BJ (cell line): ENCODE measurements at regions of chr13 and their contacts with region 1.

Region 1: DNA sequence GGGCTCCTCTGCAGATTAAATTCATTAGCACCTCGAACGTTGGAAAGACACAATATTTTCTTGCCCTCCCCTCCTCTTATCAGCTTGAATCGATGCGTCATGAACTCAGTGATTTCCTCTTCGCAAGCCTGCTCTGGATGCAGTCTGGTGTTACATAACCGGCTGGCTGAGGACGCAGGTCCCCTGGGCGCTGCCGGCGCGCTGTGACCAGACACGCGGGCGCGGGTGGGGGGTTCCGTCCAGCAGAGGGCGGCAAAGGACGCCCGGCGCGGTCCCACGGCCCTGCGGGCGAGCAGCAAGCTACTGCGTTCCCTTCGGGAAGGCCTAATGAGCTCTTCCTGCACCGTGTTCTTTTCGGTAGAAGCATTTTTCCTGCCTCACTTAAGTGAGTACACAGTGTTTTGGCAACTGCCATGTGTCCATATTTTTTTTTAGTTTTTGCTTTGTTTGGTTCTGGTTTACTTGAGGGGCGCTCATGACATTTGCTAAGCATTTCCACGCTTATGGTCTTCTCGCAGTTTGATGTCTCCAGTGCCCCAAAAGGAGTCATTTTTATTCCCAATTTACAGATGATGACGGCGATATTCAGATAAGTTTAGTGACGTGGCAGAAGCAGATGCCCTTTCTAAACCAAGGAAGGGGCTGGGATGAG is 112.2 kb upstream of the MBNL2 start:
- DNase-seq: peak; percentile 49
- H3K4me3 ChIP-seq: no peak overlapping the region
- H3K27me3 ChIP-seq: no peaks in the 10 kb centered on the region
- CTCF ChIP-seq: peak; percentile 87

Region 2: DNA sequence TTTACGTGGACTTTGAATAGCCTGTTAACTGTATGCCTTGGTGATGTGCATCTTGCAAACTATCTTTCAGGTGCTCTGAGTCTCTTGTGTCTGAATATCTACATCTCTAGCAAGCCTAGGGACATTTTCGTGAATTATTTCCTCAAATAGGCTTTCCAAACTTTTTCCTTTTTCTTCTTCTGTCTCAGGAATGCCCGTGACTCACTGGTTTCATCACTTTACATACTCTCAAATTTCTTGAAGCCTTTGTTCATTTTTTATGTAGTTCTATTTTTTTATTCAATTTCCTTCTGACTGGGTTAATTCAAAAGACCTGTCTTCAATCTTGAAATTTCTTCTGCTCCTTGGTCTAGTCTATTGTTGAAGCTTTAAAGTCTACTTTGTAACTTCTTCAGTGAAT is 447.9 kb before region 1 on chr13:
- CTCF ChIA-PET with region 1: no interaction called
- POLR2A ChIA-PET with region 1: no interaction called
- DNase-seq: no peak
- H3K4me3 ChIP-seq: no peak overlapping the region
- H3K27me3 ChIP-seq: no peaks in the 10 kb centered on the region
- CTCF ChIP-seq: no peak

Region 3: GRCh38 chr13:97030705-97031452 is 79.1 kb before region 1 on chr13:
- CTCF ChIA-PET with region 1: no interaction called
- POLR2A ChIA-PET with region 1: no interaction called
- DNase-seq: no peak
- H3K4me3 ChIP-seq: no peak overlapping the region
- H3K27me3 ChIP-seq: no peaks in the 10 kb centered on the region
- CTCF ChIP-seq: peak; percentile 36

Region 4: DNA sequence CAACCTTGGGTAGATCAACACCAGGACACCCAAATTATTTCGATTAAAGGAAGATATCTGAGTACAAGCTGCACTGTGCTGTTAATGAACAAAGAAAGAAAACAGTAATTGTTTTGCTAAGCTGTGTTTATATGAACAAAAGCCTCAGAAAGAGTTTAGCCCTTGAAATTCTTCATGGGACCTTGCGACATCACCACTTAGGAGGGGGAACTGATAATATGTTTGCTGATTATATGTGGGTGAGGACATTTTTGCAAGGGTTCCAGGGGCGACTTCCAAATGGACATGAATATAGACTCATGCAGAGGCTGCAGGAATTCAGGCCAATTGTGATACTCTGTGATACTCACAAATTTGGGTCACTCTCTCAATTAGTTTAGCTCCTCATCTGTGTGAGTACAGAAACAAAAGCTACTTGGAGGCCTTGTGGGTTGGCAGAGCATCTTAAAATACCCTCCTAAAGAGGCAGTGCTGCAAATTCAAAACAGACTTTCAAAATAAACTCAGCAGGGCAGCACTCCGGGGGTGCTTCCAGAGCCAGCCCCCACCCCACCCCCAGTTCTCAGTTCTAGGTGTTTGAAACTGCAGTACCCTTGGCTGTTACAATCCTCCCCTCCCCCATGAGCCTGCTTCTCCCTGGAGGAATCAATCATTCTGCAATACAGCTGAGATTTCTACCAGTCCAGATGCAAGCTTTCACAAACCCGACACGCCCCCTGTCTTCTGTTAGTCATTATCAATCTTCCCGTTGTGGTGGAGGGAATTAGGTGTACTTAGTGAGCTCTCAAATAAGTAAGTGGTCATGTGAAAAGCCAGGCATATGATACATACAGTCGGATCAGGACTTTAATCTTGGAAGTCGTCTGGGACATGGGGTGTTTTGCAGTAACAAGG is 15.2 kb after region 1 on chr13:
- CTCF ChIA-PET with region 1: interaction called, 25 read pairs
- POLR2A ChIA-PET with region 1: no interaction called
- DNase-seq: no peak
- H3K4me3 ChIP-seq: no peak overlapping the region
- H3K27me3 ChIP-seq: no peaks in the 10 kb centered on the region
- CTCF ChIP-seq: 0 out of 2 replicates have a peak, but pooled peaks have one; percentile 25

Region 5: GRCh38 chr13:97141564-97142005 is 31.6 kb after region 1 on chr13:
- CTCF ChIA-PET with region 1: interaction called, 15 read pairs
- POLR2A ChIA-PET with region 1: no interaction called
- DNase-seq: no peak
- H3K4me3 ChIP-seq: no peak overlapping the region
- H3K27me3 ChIP-seq: peaks cover 3% of the 10 kb centered on the region
- CTCF ChIP-seq: no peak

Region 6: DNA sequence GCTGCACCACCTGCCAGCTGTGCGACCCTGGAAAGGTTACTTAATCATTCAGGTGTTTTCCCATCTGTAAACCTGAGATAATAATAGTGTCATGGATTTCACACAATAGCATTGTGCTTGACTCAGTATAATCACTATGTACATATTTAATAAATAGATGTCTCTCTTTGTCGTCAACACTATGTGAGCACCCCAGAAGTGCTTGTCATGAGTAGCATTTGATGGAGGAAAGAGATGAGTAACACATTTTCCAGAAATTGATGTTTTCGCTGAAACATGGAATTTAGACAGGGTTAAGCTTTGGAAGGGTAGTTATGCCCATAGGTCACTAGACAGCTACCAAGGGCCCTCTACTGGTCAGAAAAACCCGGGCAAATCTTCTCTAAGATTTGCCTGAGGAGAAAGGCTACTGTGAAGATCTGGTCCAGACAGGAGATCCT is 102.7 kb after region 1 on chr13:
- CTCF ChIA-PET with region 1: interaction called, 65 read pairs
- POLR2A ChIA-PET with region 1: interaction called, 3 read pairs
- DNase-seq: no peak
- H3K4me3 ChIP-seq: no peak overlapping the region
- H3K27me3 ChIP-seq: no peaks in the 10 kb centered on the region
- CTCF ChIP-seq: peak; percentile 82

Region 7: GRCh38 chr13:97221989-97222700 is 112.2 kb after region 1 on chr13 and contains the start of gene MBNL2:
- CTCF ChIA-PET with region 1: interaction called, 21 read pairs
- POLR2A ChIA-PET with region 1: no interaction called
- DNase-seq: peak; percentile 73
- H3K4me3 ChIP-seq: peak within 1 kb of the TSS; percentile 76
- H3K27me3 ChIP-seq: no peaks in the 10 kb centered on the region
- CTCF ChIP-seq: no peak
- polyA plus RNA-seq, gene MBNL2: 27.4 and 45.5 TPM in 2 replicates

Region 8: GRCh38 chr13:97257800-97258799 is 148.1 kb after region 1 on chr13:
- CTCF ChIA-PET with region 1: no interaction called
- POLR2A ChIA-PET with region 1: no interaction called
- DNase-seq: peak; percentile 68
- H3K4me3 ChIP-seq: no peak overlapping the region
- H3K27me3 ChIP-seq: no peaks in the 10 kb centered on the region
- CTCF ChIP-seq: peak; percentile 34

Region 9: GRCh38 chr13:97344265-97345175 is 234.6 kb after region 1 on chr13:
- CTCF ChIA-PET with region 1: interaction called, 68 read pairs
- POLR2A ChIA-PET with region 1: no interaction called
- DNase-seq: no peak
- H3K4me3 ChIP-seq: no peak overlapping the region
- H3K27me3 ChIP-seq: no peaks in the 10 kb centered on the region
- CTCF ChIP-seq: peak; percentile 74

Region 10: GRCh38 chr13:97359181-97360057 is 249.5 kb after region 1 on chr13:
- CTCF ChIA-PET with region 1: interaction called, 99 read pairs
- POLR2A ChIA-PET with region 1: no interaction called
- DNase-seq: peak; percentile 25
- H3K4me3 ChIP-seq: no peak overlapping the region
- H3K27me3 ChIP-seq: no peaks in the 10 kb centered on the region
- CTCF ChIP-seq: peak; percentile 81